IMR-90 (cell line): ENCODE measurements at regions of chr1 and their contacts with region 1.

Region 1: GRCh38 chr1:42035830-42036604 is 117.2 kb upstream of the GUCA2B start:
- DNase-seq: peak; percentile 85
- ATAC-seq: peak; percentile 98
- H3K4me3 ChIP-seq: peak overlapping the region; percentile 84
- H3K27ac ChIP-seq: peak overlapping the region; percentile 41; the same call in 1 of the 2 replicates
- H3K4me1 ChIP-seq: peaks cover 5% of the 10 kb centered on the region
- H3K27me3 ChIP-seq: peaks cover 8% of the 10 kb centered on the region
- CTCF ChIP-seq: no peak
- POLR2A ChIP-seq: no peak
- RAD21 ChIP-seq: no peak

Region 2: DNA sequence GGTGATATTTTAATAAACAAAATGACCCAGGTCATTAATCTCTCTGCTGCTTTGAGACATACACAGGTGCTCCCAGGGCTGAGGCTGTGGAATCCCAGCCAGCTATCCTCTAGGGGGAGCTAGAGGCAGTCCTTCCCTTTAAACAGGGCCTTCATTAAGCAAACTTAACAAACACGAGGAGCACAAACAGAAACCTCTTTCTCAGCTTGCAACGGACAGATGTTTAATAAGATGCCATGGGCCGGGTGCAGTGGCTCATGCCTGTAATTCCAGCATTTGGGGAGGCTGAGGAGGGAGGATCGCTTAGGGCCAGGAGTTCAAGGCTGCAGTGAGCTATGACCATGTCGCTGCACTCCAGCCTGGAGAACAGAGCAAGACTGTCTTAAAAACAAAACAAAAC is 224.0 kb before region 1 on chr1:
- CTCF ChIA-PET with region 1: no interaction called
- POLR2A ChIA-PET with region 1: no interaction called
- dilution Hi-C with region 1: no loop called
- in situ Hi-C with region 1: no loop called
- intact Hi-C with region 1: loop called (anchors 2 kb)
- DNase-seq: peak; percentile 78
- ATAC-seq: peak; percentile 80
- H3K4me3 ChIP-seq: no peak overlapping the region
- H3K27ac ChIP-seq: peak overlapping the region; percentile 96
- H3K4me1 ChIP-seq: peaks cover 10% of the 10 kb centered on the region
- H3K27me3 ChIP-seq: no peaks in the 10 kb centered on the region
- CTCF ChIP-seq: peak; percentile 71
- POLR2A ChIP-seq: no peak
- RAD21 ChIP-seq: peak; percentile 81

Region 3: GRCh38 chr1:41823471-41823870 is 212.5 kb before region 1 on chr1:
- CTCF ChIA-PET with region 1: no interaction called
- POLR2A ChIA-PET with region 1: no interaction called
- dilution Hi-C with region 1: no loop called
- in situ Hi-C with region 1: no loop called
- intact Hi-C with region 1: no loop called
- DNase-seq: no peak
- ATAC-seq: peak; percentile 44; the same call in 1 of the 2 replicates
- H3K4me3 ChIP-seq: no peak overlapping the region
- H3K27ac ChIP-seq: no peak overlapping the region
- H3K4me1 ChIP-seq: peaks cover 2% of the 10 kb centered on the region; the same call in 1 of the 2 replicates
- H3K27me3 ChIP-seq: peaks cover 3% of the 10 kb centered on the region
- CTCF ChIP-seq: no peak
- POLR2A ChIP-seq: no peak
- RAD21 ChIP-seq: no peak

Region 4: GRCh38 chr1:41919764-41920397 is 116.1 kb before region 1 on chr1:
- CTCF ChIA-PET with region 1: no interaction called
- POLR2A ChIA-PET with region 1: no interaction called
- dilution Hi-C with region 1: no loop called
- in situ Hi-C with region 1: no loop called
- intact Hi-C with region 1: loop called (anchors 5 kb)
- DNase-seq: peak; percentile 26
- ATAC-seq: peak; percentile 63
- H3K4me3 ChIP-seq: peak overlapping the region; percentile 28; the same call in 1 of the 2 replicates
- H3K27ac ChIP-seq: no peak overlapping the region
- H3K4me1 ChIP-seq: peaks cover 9% of the 10 kb centered on the region
- H3K27me3 ChIP-seq: 0 out of 2 replicates have a peak, but pooled peaks cover 4% of the 10 kb centered on the region
- CTCF ChIP-seq: no peak
- POLR2A ChIP-seq: no peak
- RAD21 ChIP-seq: no peak